ENCODE measurements at regions of chr9 and their contacts with region 1.

Region 1: DNA sequence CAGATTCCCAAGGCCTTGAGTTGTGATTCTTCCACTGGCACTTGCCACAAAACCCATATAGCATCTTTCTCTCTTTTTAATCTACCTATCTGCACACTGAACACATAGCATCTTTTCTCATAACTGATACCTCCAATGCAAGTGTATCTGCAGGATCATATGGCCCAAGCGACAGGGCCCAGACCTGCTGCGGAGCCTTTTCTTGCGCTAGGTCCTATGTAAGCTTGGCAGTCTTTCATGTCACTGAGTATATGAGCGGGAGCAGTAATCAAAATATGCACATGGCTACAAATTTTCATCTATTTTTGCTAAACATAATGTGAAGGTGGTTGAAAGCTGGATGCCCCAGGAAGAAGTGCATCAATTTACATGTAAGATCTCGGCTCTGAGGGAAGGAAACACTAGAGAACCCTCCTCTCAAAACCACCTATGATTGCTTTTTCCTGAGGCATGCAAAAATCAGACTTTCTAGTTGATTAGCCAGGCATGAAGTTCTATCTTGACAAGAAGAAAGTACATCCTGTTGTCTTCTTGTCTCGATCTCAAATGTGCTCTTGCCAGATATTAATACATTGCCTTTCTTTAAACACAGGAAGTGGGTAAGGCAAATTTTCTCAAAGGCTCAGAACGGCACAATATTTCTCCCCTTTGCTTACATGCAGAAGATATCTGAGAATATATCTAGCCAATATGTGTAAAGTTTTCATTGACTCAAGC is 26.9 kb upstream of the CEMIP2 start:
- DNase-seq: peak in 6 of 14 experiments; percentile 14 to 89 (median 59)
- ATAC-seq: peak; percentile 88
- H3K4me3 ChIP-seq: no peak overlapping the region
- H3K4me3 Mint-ChIP-seq: peak overlapping the region; percentile 60
- H3K27ac ChIP-seq: peak overlapping the region; percentile 46 to 86
- H3K27ac Mint-ChIP-seq: peak overlapping the region; percentile 94
- H3K4me1 ChIP-seq: peaks cover 57% of the 10 kb centered on the region
- H3K4me1 Mint-ChIP-seq: peaks cover 73% of the 10 kb centered on the region
- H3K27me3 ChIP-seq: no peaks in the 10 kb centered on the region
- H3K27me3 Mint-ChIP-seq: no peaks in the 10 kb centered on the region
- CTCF ChIP-seq: no peak

Region 2: DNA sequence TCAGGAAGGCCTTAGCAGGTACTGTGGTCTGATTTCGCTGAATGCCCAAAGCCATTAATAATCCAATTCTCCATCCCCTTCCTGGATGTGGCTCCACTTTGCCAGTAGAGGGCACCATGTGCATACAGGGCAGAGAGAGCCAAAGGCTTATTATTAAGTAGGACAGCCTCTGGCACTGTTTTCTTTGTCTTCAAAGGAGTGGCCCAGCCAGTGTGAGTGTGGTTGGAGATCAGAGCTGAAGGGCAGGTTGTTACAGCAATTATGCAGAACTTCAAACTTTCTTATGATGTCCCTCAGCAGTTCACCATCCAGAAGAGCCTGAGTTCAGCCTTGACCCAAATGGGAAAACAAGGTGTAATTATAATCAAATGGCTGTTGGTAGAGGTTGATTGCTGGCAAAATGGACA is 11.6 kb after region 1 on chr9:
- CTCF ChIA-PET with region 1: interaction called, 17 read pairs
- POLR2A ChIA-PET with region 1: interaction called, 11 read pairs
- intact Hi-C with region 1: no loop called
- DNase-seq: peak; percentile 31 to 81 (median 46)
- ATAC-seq: peak; percentile 90
- H3K4me3 ChIP-seq: no peak overlapping the region
- H3K4me3 Mint-ChIP-seq: no peak overlapping the region
- H3K27ac ChIP-seq: no peak overlapping the region
- H3K27ac Mint-ChIP-seq: no peak overlapping the region
- H3K4me1 ChIP-seq: peaks cover 10% of the 10 kb centered on the region
- H3K4me1 Mint-ChIP-seq: peaks cover 14% of the 10 kb centered on the region
- H3K27me3 ChIP-seq: no peaks in the 10 kb centered on the region
- H3K27me3 Mint-ChIP-seq: no peaks in the 10 kb centered on the region
- CTCF ChIP-seq: peak; percentile 90

Measured in CD4-positive, alpha-beta T cell (primary cell).